ENCODE measurements at regions of chr16 and their contacts with region 1.

Region 1: GRCh38 chr16:29694384-29695195 is 15.6 kb downstream of the QPRT start:
- DNase-seq: no peak
- ATAC-seq: no peak
- H3K4me3 ChIP-seq: no peak overlapping the region
- H3K4me3 Mint-ChIP-seq: no peak overlapping the region
- H3K27ac ChIP-seq: no peak overlapping the region
- H3K27ac Mint-ChIP-seq: no peak overlapping the region
- H3K4me1 ChIP-seq: no peaks in the 10 kb centered on the region
- H3K4me1 Mint-ChIP-seq: peaks cover 9% of the 10 kb centered on the region
- H3K27me3 ChIP-seq: no peaks in the 10 kb centered on the region
- H3K27me3 Mint-ChIP-seq: no peaks in the 10 kb centered on the region
- CTCF ChIP-seq: no peak

Region 2: DNA sequence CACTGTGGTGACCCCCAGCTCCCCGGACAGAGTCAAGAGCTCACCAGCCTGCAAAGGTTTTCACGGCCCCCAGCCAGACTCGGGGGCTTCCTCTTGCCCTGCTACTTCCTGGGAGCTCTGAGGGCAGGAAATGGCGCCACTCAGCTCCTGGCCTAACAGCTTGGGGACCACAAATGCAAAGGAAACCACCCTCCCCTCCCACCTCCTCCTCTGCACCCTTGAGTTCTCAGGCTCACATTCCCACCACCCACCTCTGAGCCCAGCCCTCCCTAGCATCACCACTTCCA is 31.9 kb before region 1 on chr16:
- CTCF ChIA-PET with region 1: no interaction called
- POLR2A ChIA-PET with region 1: no interaction called
- intact Hi-C with region 1: no loop called
- DNase-seq: peak in 6 of 9 experiments; percentile 41 to 91 (median 58)
- ATAC-seq: peak; percentile 32
- H3K4me3 ChIP-seq: peak overlapping the region; percentile 89 to 92
- H3K4me3 Mint-ChIP-seq: peak overlapping the region; percentile 98
- H3K27ac ChIP-seq: peak overlapping the region; percentile 65 to 83
- H3K27ac Mint-ChIP-seq: peak overlapping the region; percentile 95
- H3K4me1 ChIP-seq: peaks cover 49% of the 10 kb centered on the region
- H3K4me1 Mint-ChIP-seq: peaks cover 63% of the 10 kb centered on the region
- H3K27me3 ChIP-seq: no peaks in the 10 kb centered on the region
- H3K27me3 Mint-ChIP-seq: no peaks in the 10 kb centered on the region
- CTCF ChIP-seq: no peak

Region 3: DNA sequence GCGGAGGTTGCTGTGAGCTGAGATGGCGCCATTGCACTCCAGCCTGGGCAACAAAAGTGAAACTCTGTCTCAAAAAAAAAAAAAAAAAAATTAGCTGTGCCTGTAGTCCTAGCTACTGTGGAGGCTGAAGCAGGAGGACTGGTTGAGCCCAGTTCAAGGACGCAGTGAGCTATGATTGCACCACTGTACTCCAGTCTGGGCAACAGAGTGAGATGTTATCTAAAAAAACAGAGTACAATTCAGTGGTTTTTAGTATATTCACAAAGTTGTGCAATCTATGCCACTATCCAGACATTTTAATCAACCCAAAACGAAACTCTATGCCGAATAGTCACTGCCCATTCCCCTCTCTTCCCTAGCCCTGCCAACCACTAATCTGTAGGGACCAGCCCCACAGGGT is 26.1 kb after region 1 on chr16:
- CTCF ChIA-PET with region 1: interaction called, 89 read pairs
- POLR2A ChIA-PET with region 1: no interaction called
- intact Hi-C with region 1: no loop called
- DNase-seq: no peak
- ATAC-seq: no peak
- H3K4me3 ChIP-seq: no peak overlapping the region
- H3K4me3 Mint-ChIP-seq: no peak overlapping the region
- H3K27ac ChIP-seq: no peak overlapping the region
- H3K27ac Mint-ChIP-seq: no peak overlapping the region
- H3K4me1 ChIP-seq: peaks cover 3% of the 10 kb centered on the region
- H3K4me1 Mint-ChIP-seq: peaks cover 17% of the 10 kb centered on the region
- H3K27me3 ChIP-seq: no peaks in the 10 kb centered on the region
- H3K27me3 Mint-ChIP-seq: no peaks in the 10 kb centered on the region
- CTCF ChIP-seq: no peak

Region 4: DNA sequence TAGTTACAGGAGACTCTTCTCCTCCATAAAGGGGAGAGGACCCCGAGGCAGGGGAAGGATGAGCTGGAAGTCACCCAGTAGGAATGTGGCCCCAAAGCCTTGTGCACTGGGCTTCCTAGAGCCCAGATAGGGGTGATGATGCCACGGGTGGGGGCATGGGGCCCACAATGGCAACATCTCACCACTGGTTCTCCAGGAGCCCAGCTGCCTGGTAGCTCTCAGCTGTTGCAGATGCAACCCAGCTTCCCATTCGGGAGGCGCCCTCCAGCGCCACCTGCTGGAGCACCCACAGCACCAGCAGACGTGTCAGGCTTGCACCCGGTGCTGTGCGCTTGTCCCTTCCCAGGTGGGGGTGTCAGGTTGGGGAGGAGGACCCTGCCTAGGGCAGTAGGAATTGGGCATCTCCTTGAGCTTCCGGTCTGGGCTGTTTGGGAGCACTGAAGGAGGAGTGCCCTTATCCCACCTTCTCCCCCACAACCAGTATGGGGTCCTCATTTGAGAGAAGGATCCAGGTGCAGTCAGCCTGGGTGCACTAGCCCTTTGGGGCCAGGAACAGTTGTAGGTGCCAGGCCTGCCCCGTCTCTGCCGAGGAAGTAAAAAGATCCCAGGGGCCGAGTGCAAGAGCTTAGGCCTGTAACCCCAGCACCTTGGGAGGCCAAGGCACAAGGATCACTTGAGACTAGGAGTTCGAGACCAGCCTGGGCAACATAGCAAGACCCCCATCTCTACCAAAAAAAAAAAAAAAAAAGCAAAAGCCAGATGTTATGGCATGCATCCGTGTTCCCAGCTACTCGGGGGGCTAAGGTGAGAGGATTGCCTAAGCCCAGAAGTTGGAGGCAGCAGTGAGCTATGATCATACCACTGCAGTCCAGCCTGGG is 154.1 kb after region 1 on chr16:
- CTCF ChIA-PET with region 1: interaction called, 113 read pairs
- POLR2A ChIA-PET with region 1: no interaction called
- intact Hi-C with region 1: loop called (anchors 1 kb)
- DNase-seq: peak; percentile 62 to 92 (median 84)
- ATAC-seq: peak; percentile 98
- H3K4me3 ChIP-seq: no peak overlapping the region
- H3K4me3 Mint-ChIP-seq: no peak overlapping the region
- H3K27ac ChIP-seq: no peak overlapping the region
- H3K27ac Mint-ChIP-seq: no peak overlapping the region
- H3K4me1 ChIP-seq: no peaks in the 10 kb centered on the region
- H3K4me1 Mint-ChIP-seq: peaks cover 3% of the 10 kb centered on the region
- H3K27me3 ChIP-seq: no peaks in the 10 kb centered on the region
- H3K27me3 Mint-ChIP-seq: no peaks in the 10 kb centered on the region
- CTCF ChIP-seq: peak; percentile 78

Region 5: DNA sequence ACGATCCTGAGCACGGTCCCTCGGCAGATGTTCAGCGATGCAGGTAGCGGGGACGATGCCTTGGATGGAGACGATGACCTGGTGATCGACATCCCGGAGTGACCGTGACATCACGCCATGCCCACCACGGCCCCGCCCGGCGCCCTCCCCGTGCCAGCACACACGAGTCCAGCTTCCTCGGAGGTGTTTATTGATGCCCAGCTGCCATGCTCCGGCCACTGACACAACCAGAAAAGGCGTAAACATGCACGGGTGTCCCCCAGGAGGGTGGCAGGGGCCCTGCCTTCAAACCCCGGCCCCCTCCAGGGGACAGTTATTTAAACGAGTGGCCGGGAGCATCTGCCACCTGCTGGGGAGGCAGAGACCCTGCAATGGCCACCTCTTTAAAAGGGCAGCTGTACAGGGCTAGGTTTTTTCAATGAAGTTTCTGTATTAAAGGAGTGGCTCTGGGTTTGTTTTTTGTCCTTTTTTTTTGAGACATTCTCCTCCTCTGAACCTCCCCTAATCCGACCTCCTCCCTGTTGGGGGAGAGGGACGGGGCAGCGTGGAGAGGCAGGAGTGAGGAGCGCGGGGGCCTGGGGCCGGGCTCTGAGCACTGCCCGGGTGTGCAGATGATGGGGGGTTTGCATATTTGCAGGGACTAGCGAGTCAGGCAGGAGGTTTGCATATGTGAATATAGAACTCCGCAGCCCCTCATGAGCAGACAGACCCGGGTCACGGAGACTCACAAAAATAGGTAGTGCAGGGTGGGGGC is 310.9 kb after region 1 on chr16:
- CTCF ChIA-PET with region 1: interaction called, 15 read pairs
- POLR2A ChIA-PET with region 1: no interaction called
- intact Hi-C with region 1: loop called in 1 of 2 experiments (anchors 1 kb)
- DNase-seq: peak in 7 of 9 experiments; percentile 17 to 66 (median 55)
- ATAC-seq: peak; percentile 87
- H3K4me3 ChIP-seq: no peak overlapping the region
- H3K4me3 Mint-ChIP-seq: no peak overlapping the region
- H3K27ac ChIP-seq: no peak overlapping the region
- H3K27ac Mint-ChIP-seq: no peak overlapping the region
- H3K4me1 ChIP-seq: peaks cover 5% of the 10 kb centered on the region
- H3K4me1 Mint-ChIP-seq: peaks cover 6% of the 10 kb centered on the region
- H3K27me3 ChIP-seq: peaks cover 0 to 11% of the 10 kb centered on the region in 2 experiments
- H3K27me3 Mint-ChIP-seq: peaks cover 13% of the 10 kb centered on the region
- CTCF ChIP-seq: peak; percentile 71

Region 6: DNA sequence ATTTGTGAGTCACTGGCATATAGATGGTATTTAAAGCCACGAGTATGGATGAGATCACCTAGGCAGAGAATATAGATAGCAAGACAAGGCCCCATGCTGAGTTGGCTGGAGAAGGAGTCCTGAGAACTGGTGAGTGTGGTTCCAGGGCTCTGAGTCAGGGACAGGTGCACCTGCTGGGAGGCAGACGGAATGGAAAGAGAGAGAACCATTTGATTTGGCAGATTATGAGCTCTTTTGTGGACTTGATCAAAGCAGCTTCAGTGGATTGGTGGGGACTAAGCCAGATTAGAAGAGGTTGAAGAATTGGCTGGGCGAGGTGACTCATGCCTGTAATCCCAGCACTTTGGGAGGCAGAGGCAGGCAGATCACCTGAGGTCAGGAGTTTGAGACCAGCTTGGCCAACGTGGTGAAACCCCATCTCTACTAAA is 324.2 kb after region 1 on chr16:
- CTCF ChIA-PET with region 1: interaction called, 19 read pairs
- POLR2A ChIA-PET with region 1: no interaction called
- intact Hi-C with region 1: loop called (anchors 1 kb)
- DNase-seq: no peak
- ATAC-seq: no peak
- H3K4me3 ChIP-seq: no peak overlapping the region
- H3K4me3 Mint-ChIP-seq: no peak overlapping the region
- H3K27ac ChIP-seq: no peak overlapping the region
- H3K27ac Mint-ChIP-seq: no peak overlapping the region
- H3K4me1 ChIP-seq: peaks cover 7% of the 10 kb centered on the region
- H3K4me1 Mint-ChIP-seq: peaks cover 5% of the 10 kb centered on the region
- H3K27me3 ChIP-seq: peaks cover 0 to 3% of the 10 kb centered on the region in 2 experiments
- H3K27me3 Mint-ChIP-seq: no peaks in the 10 kb centered on the region
- CTCF ChIP-seq: no peak

Region 7: DNA sequence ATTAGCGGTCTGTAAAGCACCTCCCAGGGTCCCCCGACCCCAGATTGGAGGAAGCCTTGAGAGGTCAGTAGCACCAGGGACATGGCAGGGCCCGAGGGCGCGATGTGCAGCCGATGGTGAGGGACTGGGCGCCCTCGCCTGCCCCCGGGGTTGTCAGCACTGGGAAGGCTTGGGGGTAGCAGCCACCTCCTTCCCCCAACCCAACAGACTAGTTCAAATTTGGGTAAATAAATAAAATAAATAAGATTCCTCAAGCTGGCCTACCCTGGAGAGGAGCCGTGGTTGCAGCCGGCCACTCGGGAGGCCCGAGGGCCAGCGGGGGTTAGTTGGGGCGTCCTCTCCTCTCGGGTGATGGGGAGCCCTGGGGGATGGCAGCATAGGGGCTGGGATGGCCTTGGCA is 329.9 kb after region 1 on chr16:
- CTCF ChIA-PET with region 1: interaction called, 19 read pairs
- POLR2A ChIA-PET with region 1: no interaction called
- intact Hi-C with region 1: loop called (anchors 1 kb)
- DNase-seq: no peak
- ATAC-seq: no peak
- H3K4me3 ChIP-seq: no peak overlapping the region
- H3K4me3 Mint-ChIP-seq: no peak overlapping the region
- H3K27ac ChIP-seq: no peak overlapping the region
- H3K27ac Mint-ChIP-seq: no peak overlapping the region
- H3K4me1 ChIP-seq: peaks cover 7% of the 10 kb centered on the region
- H3K4me1 Mint-ChIP-seq: peaks cover 5% of the 10 kb centered on the region
- H3K27me3 ChIP-seq: peaks cover 7 to 14% of the 10 kb centered on the region in 2 experiments
- H3K27me3 Mint-ChIP-seq: peaks cover 30% of the 10 kb centered on the region
- CTCF ChIP-seq: no peak

Region 8: DNA sequence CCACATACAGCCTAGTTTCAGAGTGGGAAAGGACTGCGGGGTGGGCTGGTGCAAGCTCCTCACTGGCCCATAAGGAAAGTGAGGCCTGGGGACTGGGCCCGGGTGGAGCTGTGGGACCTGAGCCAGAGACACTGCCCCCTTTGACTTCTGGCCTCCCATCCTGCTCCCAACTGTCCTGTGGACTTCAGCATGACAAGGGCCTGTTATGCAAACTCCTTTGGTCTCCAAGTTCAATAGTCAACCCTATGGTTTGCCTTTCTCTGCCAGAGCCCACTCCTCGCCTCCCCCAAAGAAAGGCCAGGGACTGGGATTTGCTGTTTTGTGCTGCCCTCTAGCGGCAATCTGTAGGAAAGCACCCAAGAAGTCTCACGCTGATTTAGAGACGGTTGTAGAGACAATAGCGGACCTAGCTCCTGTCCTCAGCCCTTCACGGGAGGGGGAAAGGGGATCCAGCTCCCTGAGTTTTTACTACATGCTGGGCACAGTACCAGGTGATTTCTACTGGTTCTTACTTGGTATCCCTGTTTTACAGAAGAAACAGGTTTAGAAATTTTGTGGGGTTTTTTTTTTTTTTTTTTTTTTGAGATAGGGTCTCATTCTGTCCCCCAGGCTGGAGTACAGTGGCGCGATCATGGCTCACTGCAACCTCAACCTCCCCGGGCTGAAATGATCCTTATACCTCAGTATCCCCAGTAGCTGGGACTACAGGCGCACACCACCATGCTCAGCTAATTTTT is 337.7 kb after region 1 on chr16:
- CTCF ChIA-PET with region 1: interaction called, 21 read pairs
- POLR2A ChIA-PET with region 1: no interaction called
- intact Hi-C with region 1: no loop called
- DNase-seq: peak; percentile 30 to 78 (median 61)
- ATAC-seq: peak; percentile 79
- H3K4me3 ChIP-seq: no peak overlapping the region
- H3K4me3 Mint-ChIP-seq: no peak overlapping the region
- H3K27ac ChIP-seq: no peak overlapping the region
- H3K27ac Mint-ChIP-seq: no peak overlapping the region
- H3K4me1 ChIP-seq: peaks cover 11% of the 10 kb centered on the region
- H3K4me1 Mint-ChIP-seq: peaks cover 12% of the 10 kb centered on the region
- H3K27me3 ChIP-seq: peaks cover 15 to 43% of the 10 kb centered on the region in 2 experiments
- H3K27me3 Mint-ChIP-seq: peaks cover 50% of the 10 kb centered on the region
- CTCF ChIP-seq: peak; percentile 66

Measured in CD8-positive, alpha-beta T cell (primary cell).